ENCODE measurements at regions of chr17 and their contacts with region 1.

Region 1: DNA sequence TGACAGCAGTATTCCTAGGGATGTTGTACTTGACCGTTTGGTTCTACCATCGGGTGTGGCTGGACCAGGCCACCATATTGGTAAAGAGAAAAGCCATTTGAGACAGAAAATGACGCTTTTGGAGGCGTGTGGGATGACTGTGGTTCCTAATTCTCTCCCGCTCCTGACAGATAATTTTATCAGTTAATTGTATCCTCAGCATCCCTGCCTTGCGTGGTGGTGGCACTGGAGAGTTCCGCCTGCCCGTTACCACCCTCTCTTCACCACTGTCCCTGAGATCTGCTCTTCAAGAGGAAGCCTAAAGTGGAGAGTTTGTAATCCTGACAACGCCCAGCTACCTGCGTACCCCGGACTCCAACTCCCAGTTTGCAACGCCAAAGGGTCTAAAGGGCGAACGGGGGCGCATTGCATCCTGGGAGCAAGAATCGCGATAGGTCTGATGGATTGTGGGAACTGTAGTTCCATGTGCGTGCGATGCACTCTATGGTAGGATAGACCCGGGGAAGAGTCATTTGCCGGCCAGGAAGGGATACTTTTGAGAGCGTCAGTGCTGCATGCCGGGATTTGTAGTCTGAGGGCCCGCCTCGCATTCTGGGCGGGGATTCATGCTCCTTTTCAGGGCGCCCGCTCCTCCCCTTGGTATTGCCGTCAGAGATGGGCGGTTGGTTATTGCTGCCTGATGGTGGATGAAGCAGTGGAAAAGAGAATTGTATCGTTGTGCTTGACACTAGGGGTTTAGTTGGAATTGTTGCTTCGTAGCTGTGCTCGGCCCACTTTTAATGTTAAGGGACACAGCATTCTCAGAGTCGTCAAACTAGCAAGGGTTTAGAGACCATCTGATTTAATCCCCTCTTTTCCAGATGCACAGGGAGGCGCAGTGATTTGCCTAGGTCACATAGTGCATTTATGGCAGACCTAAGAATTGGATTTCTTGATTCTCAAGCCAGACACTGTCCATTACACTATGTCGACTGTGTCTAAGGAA is 965 bp upstream of the PHF12 start:
- DNase-seq: peak; percentile 98
- ATAC-seq: peak; percentile 76
- H3K4me3 Mint-ChIP-seq: no peak overlapping the region
- H3K27ac Mint-ChIP-seq: no peak overlapping the region
- H3K4me1 Mint-ChIP-seq: peaks cover 15% of the 10 kb centered on the region
- H3K27me3 Mint-ChIP-seq: no peaks in the 10 kb centered on the region

Region 2: DNA sequence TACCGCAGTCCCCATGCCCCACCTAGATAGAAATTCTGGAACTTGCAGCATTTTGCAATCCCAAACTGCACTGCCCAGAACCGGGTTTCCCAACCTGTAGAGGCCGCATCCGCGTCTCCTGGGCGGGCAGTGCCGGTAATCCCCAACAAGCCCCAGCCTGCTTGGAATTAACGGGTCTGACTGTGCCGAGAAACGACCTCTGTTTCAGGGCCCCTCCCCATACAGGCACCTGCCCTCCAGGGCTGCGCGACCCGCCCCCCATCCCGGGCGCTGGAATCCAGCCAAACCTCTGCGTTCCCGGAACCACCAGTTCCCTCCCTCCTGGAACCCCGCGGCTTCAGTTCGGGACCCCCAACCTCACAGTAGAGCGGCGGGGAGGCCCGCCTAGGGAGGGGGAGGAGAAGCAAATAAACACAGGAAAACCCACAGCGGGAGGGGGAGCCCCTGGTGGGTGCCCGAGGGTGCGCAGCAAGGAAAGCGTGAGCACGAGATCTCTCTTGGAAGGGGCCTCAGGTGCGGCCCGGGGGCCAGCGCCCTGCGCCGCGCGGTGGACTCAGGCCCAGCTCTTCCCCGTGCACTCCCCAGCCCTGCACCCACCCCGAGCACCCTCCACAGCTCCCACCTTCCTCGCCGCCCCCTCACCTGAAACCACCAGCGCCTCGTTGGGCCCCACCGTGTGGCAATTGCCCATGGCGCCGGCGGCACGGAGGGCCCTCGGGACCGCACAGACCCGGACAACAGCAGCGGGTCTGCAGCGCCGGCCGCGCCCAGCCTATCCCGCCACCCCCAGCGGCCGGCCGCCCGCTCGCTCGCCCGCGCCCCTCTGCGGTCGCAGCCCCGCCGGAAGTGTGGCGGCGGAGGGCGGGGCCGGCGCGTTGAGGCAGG is 55.2 kb before region 1 on chr17 and contains the start of gene FLOT2:
- CTCF ChIA-PET with region 1: interaction called, 11 read pairs
- POLR2A ChIA-PET with region 1: interaction called, 23 read pairs
- DNase-seq: peak; percentile 73
- ATAC-seq: peak; percentile 74
- H3K4me3 Mint-ChIP-seq: peak within 1 kb of the TSS; percentile 98
- H3K27ac Mint-ChIP-seq: peak within 1 kb of the TSS; percentile 95
- H3K4me1 Mint-ChIP-seq: peaks cover 66% of the 10 kb centered on the region
- H3K27me3 Mint-ChIP-seq: no peaks in the 10 kb centered on the region
- total RNA-seq, gene FLOT2: 197 to 198 TPM

Region 3: DNA sequence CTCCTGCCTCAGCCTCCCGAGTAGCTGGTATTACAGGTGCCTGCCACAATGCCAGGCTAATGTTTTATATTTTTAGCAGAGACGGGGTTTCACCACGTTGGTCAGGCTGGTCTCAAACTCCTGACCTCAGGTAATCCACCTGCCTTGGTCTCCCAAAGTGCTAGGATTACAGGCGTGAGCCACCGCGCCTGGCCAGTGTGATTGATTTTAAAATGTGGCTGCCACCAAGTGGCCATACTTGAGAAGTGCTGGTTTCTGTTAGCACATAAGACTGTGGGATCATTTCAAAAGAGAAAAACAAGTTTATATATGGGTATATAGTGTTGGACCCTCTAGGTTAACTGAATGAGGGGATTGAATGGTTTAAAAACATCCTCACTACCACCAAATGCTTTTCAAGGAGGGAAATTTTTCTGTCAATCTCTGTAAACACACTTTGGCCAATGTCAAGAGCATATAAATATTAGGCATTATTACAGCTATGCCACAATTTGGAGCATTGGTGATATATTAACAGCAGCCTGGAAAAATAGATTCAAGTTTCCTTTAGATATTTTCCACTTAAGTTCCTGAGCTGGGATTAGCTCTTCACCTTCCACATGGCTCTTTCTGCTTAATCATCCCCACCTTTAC is 35.9 kb before region 1 on chr17:
- CTCF ChIA-PET with region 1: interaction called, 11 read pairs
- POLR2A ChIA-PET with region 1: no interaction called
- DNase-seq: peak; percentile 54
- ATAC-seq: peak; percentile 74
- H3K4me3 Mint-ChIP-seq: no peak overlapping the region
- H3K27ac Mint-ChIP-seq: no peak overlapping the region
- H3K4me1 Mint-ChIP-seq: no peaks in the 10 kb centered on the region
- H3K27me3 Mint-ChIP-seq: no peaks in the 10 kb centered on the region

Region 4: GRCh38 chr17:28937044-28937729 is 15.1 kb before region 1 on chr17:
- CTCF ChIA-PET with region 1: interaction called, 18 read pairs
- POLR2A ChIA-PET with region 1: interaction called, 6 read pairs
- DNase-seq: no peak
- ATAC-seq: no peak
- H3K4me3 Mint-ChIP-seq: no peak overlapping the region
- H3K27ac Mint-ChIP-seq: no peak overlapping the region
- H3K4me1 Mint-ChIP-seq: peaks cover 62% of the 10 kb centered on the region
- H3K27me3 Mint-ChIP-seq: no peaks in the 10 kb centered on the region

Region 5: DNA sequence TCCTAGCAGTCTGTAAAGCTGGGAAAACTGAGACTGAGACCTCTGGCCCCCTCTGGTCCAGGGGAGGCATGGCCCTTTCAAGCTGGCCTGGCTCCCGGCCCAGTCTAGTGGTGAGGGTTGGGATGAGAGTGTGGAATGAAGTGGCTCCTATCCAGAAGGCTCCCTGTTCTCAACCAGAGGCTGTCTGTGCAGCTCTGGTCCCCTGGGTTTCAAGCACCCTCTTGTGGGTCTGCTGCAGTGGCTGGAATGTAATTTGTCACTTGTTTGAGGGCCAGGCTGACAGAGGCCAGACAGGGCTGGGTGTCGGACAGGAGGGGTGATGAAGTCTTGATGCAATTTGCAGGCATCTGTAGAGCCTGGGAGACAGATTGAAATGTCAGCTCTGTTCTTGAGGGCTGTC is 21.1 kb after region 1 on chr17:
- CTCF ChIA-PET with region 1: interaction called, 10 read pairs
- POLR2A ChIA-PET with region 1: no interaction called
- DNase-seq: no peak
- ATAC-seq: no peak
- H3K4me3 Mint-ChIP-seq: no peak overlapping the region
- H3K27ac Mint-ChIP-seq: no peak overlapping the region
- H3K4me1 Mint-ChIP-seq: peaks cover under 1% of the 10 kb centered on the region
- H3K27me3 Mint-ChIP-seq: peaks cover 6% of the 10 kb centered on the region

Region 6: DNA sequence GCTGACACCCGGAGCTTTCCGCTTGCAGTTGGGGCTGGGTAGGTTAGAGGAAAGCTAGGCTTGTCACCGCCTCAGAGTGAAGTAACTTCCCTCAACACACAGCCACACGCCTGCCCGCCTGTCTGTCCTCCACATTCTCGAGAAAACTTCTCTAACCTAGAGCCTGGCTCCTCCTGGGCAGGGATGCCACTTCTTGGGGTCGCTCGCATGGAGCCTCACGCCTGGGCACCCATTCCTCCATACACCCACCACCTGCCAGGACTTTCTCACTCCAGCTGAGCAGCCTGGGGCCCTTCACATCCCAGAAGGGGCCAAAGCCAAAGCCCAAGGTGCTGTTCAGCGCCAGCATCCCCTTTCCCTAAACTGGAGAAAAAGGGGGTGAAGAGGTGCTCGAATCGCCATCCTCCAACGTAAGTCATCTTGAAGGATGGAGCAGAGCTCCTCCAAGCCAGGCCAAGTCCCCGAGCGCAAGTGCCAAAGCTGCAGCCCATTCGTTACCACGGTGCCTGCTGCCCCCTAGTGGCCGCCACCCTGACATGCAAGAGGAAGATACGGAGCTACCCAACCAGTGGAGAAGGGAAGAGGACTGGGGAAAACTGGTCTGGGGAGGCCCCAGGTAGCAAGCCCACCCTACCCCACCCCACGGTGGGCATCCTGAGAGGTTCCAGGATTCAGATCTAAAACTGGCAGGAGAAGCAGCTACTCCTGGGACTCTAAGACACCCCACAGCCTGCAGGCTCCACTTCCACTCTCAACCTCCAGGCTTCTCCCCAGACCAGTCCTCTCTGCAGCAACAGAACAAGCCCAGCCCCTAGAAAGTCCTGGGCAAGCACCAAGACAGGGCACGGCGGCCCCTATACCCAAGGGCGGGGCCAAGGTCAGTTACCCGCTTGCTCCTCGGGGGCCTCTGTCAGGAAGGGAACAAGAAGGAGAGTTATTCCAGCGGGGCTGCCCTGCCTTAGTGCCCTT is 164.8 kb after region 1 on chr17:
- CTCF ChIA-PET with region 1: interaction called, 36 read pairs
- POLR2A ChIA-PET with region 1: interaction called, 4 read pairs
- DNase-seq: peak; percentile 81
- ATAC-seq: peak; percentile 59
- H3K4me3 Mint-ChIP-seq: no peak overlapping the region
- H3K27ac Mint-ChIP-seq: no peak overlapping the region
- H3K4me1 Mint-ChIP-seq: peaks cover 9% of the 10 kb centered on the region
- H3K27me3 Mint-ChIP-seq: no peaks in the 10 kb centered on the region

Region 7: GRCh38 chr17:29469276-29469675 is 517.0 kb after region 1 on chr17:
- CTCF ChIA-PET with region 1: no interaction called
- POLR2A ChIA-PET with region 1: no interaction called
- DNase-seq: no peak
- ATAC-seq: no peak
- H3K4me3 Mint-ChIP-seq: no peak overlapping the region
- H3K27ac Mint-ChIP-seq: no peak overlapping the region
- H3K4me1 Mint-ChIP-seq: no peaks in the 10 kb centered on the region
- H3K27me3 Mint-ChIP-seq: no peaks in the 10 kb centered on the region

Measured in activated CD8-positive, alpha-beta T cell treated with anti-CD3 and anti-CD28 coated beads, Interleukin-2, amount 10 ng/mL, durations not matched to agents 7 days and 5 days (primary cell).